ENCODE measurements at regions of chr1 and their contacts with region 1.

Region 1: GRCh38 chr1:201481761-201482493 is 12.9 kb upstream of the PHLDA3 start:
- DNase-seq: peak; percentile 94
- H3K4me3 Mint-ChIP-seq: peak overlapping the region; percentile 0
- H3K27ac Mint-ChIP-seq: no peak overlapping the region
- H3K4me1 Mint-ChIP-seq: peaks cover 33% of the 10 kb centered on the region
- H3K27me3 Mint-ChIP-seq: no peaks in the 10 kb centered on the region
- CTCF ChIP-seq: peak; percentile 100

Region 2: GRCh38 chr1:201391651-201392511 is 90.0 kb before region 1 on chr1:
- CTCF ChIA-PET with region 1: interaction called, 11 read pairs
- POLR2A ChIA-PET with region 1: no interaction called
- intact Hi-C with region 1: no loop called
- DNase-seq: no peak
- H3K4me3 Mint-ChIP-seq: no peak overlapping the region
- H3K27ac Mint-ChIP-seq: no peak overlapping the region
- H3K4me1 Mint-ChIP-seq: peaks cover 9% of the 10 kb centered on the region
- H3K27me3 Mint-ChIP-seq: no peaks in the 10 kb centered on the region
- CTCF ChIP-seq: no peak

Region 3: DNA sequence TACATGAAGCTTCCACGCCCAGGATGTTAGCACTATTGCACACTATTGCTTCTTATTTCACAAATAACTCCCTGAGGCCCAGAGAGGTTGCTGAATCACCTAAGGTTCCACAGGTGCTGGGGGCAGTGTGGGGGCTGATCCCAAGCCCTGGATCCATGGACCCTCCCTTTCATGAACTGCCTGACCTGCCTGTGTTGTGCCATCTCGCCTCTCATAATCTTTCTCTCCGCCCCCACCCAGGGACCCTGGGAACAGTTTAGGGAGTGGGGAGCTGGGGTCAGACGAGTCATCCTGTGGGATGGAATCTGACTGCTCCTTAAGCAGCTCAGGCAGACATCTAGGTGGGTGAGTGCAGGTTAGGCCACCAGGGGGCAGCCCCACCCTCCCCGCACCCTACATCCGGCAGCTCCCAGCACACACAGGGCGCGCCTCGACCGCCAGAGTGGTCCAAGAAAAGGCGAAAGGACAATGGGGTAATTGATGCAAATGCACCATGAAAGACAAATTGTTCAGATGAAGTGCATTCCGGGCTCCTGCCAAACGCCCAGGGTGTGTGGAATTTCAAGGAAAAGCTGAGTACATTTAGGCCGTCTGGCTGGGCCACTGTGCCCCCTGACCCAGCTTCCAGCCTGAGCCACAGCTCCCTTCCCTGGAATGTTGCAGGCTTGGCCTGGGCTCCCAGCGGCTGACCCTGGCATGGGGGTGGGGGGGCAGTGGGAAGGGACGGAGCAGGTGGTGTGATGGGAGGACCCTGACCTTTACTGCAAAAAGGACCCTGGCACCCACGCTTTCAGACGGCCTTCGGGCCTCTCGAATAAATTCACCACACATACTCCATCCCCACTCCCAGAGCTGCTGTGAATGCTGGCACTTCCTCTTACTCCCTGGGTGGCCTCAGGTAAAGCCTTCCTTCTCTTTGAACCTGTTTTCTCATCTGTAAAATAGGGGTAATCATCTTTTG is 33.7 kb before region 1 on chr1:
- CTCF ChIA-PET with region 1: interaction called, 3,816 read pairs
- POLR2A ChIA-PET with region 1: interaction called, 1,388 read pairs
- intact Hi-C with region 1: loop called (anchors 1 kb)
- DNase-seq: peak; percentile 89
- H3K4me3 Mint-ChIP-seq: no peak overlapping the region
- H3K27ac Mint-ChIP-seq: peak overlapping the region; percentile 36
- H3K4me1 Mint-ChIP-seq: peaks cover 8% of the 10 kb centered on the region
- H3K27me3 Mint-ChIP-seq: no peaks in the 10 kb centered on the region
- CTCF ChIP-seq: peak; percentile 98

Region 4: GRCh38 chr1:201517948-201518470 is 36.1 kb after region 1 on chr1:
- CTCF ChIA-PET with region 1: interaction called, 3,816 read pairs
- POLR2A ChIA-PET with region 1: interaction called, 330 read pairs
- intact Hi-C with region 1: loop called (anchors 1 kb)
- DNase-seq: no peak
- H3K4me3 Mint-ChIP-seq: no peak overlapping the region
- H3K27ac Mint-ChIP-seq: peak overlapping the region; percentile 2
- H3K4me1 Mint-ChIP-seq: peaks cover 7% of the 10 kb centered on the region
- H3K27me3 Mint-ChIP-seq: no peaks in the 10 kb centered on the region
- CTCF ChIP-seq: no peak

Region 5: GRCh38 chr1:201608635-201609395 is 126.9 kb after region 1 on chr1:
- CTCF ChIA-PET with region 1: interaction called, 10 read pairs
- POLR2A ChIA-PET with region 1: no interaction called
- intact Hi-C with region 1: no loop called
- DNase-seq: no peak
- H3K4me3 Mint-ChIP-seq: no peak overlapping the region
- H3K27ac Mint-ChIP-seq: no peak overlapping the region
- H3K4me1 Mint-ChIP-seq: no peaks in the 10 kb centered on the region
- H3K27me3 Mint-ChIP-seq: no peaks in the 10 kb centered on the region
- CTCF ChIP-seq: no peak